ENCODE measurements at regions of chr4 and their contacts with region 1.

Region 1: GRCh38 chr4:173257732-173258717 is 76.1 kb downstream of the HMGB2 start:
- DNase-seq: peak; percentile 62
- ATAC-seq: peak; percentile 96 to 97

Region 2: DNA sequence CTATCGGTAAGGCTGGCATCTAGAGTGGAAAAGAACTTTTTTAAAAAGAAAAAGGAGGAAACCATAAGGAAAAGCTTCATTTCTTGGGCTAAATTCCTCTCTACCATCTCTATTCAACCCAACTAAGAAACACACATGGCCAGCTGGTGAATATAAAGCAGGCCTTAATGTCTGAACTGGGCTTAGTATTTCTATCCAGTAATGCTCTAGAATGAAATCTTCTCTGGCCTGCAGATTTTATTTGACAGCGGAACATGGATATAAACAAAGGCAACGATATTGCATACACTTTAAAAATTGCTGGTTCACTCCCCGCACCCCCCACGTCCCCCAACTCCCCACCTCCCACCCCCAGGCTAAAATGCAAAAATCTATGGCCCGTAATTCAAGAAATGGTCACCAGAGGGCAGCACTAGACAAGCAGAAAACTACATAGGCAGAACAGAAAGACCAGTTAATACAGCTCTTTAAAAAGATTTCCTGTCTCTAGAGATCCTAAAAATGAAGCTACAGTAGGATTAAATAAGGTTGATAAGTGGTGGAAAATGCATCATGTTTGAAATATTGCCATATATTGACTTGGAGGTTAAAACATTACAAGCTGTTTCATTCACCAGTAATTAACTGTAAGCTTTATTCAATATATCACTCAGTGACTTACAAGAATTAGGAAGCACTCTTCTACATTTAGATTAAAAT is 244.6 kb before region 1 on chr4:
- intact Hi-C with region 1: loop called (anchors 2 to 5 kb)
- DNase-seq: no peak
- ATAC-seq: peak; percentile 47 to 76

Region 3: DNA sequence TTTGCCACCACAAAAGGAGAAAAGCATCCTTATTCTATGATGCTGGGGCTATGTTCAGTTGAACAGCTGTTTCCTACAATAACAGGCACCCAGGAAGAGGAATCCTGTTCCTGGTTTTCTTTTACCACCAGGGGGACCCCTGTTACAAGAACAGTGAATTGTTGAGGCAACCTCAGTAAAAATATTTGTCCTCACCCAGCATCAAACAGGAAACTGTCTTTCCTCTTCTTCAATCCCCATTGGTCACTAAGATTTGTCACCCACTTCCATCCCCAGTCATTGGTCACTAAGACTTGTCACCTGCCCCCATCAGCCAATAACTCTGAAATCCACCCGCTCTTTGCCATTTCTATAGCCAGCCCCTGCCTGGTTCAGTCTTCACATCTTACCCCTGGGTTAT is 232.9 kb before region 1 on chr4:
- intact Hi-C with region 1: loop called in 1 of 2 experiments (anchors 2 kb)
- DNase-seq: no peak
- ATAC-seq: peak in 1 of 2 donors; percentile 78

Region 4: DNA sequence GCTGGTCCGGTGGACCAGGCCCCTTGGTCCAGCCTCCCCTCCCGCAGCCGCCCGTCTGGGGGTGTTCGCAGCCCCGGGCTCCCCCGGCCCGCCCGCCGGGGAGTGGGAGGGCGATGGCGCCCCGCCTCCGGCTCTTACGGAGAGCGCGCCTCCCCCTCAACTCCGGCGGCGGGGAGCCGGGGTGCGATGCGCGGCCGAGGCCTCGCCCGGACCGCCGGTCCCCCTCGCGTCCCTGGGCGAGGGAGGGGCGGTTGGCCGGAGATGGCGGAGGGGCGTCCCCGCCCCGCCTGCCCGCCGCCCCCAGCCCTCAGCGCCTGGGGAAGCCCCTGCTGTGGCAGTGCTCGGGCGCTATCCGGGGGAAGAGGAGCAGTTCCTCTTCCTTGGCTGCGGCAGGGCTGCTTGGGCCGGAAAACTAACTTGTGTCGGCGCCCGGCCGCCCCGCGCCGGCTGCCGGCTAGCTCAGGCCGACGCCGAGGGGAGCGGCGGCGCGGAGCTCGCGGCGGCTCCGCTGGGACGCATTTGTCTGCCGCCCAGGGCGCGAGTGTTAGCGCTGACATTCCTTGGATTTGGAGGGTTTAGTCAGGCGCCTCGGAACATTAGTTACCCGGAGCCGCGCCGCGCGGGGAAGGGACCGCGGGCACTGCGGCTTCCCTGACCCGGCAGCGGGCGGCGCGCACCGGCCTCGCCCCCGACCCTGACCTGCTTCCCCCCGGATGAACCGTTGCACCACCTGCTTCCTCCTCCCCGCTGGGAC is 88.4 kb before region 1 on chr4:
- intact Hi-C with region 1: loop called in 1 of 2 experiments (anchors 10 kb)
- DNase-seq: peak; percentile 67
- ATAC-seq: peak; percentile 77 to 83

Region 5: GRCh38 chr4:173746424-173746823 is 488.4 kb after region 1 on chr4:
- intact Hi-C with region 1: no loop called
- DNase-seq: no peak
- ATAC-seq: peak in 1 of 2 donors; percentile 36